Activated CD4-positive, alpha-beta T cell treated with anti-CD3 and anti-CD28 coated beads for 36 hours (primary cell): ENCODE measurements at regions of chr3 and their contacts with region 1.

Region 1: GRCh38 chr3:52270252-52270754 is 8.1 kb downstream of the WDR82 start:
- DNase-seq: no peak
- ATAC-seq: no peak
- H3K4me3 Mint-ChIP-seq: peak overlapping the region; percentile 99
- H3K27ac Mint-ChIP-seq: peak overlapping the region; percentile 93
- H3K4me1 Mint-ChIP-seq: peaks cover 85% of the 10 kb centered on the region
- H3K27me3 Mint-ChIP-seq: no peaks in the 10 kb centered on the region

Region 2: DNA sequence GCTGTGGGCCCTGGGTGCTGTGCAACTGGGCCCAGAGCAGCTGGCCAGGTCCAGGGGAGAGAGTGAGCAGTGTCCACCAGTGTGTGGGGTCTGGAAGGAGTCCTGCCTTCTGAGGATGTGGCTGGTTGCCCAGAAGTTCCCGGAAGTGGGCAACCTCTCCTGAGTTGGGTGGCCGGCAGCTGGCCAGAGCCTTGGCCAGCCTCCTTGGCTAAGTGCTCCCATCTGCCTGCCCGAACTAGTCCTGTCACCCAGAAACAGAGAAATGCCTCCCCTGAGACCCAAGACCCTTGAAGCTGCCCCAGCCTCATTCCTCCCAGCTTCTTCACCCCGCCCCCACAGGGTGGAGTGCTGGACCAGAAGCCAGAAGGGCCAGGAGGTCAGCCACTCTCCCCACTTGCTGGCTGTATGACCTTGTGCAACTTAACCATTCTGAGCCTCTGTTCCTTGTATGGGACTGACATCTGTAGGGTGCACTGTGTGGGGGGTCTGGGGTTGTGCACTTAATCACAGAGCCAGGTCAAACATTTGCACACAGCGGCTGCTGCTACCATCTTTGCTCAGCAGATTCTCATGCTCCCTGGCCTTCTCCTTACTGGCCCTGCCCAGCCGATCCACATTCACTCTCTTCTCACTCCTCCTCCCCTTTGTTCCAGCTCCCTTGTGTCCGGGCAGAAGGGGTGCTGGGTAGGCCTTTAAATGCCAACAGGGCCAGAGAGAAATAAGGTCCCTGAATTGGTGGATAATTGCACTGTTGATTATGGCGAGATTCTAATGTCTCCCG is 79.8 kb before region 1 on chr3:
- CTCF ChIA-PET with region 1: no interaction called
- POLR2A ChIA-PET with region 1: no interaction called
- intact Hi-C with region 1: no loop called
- DNase-seq: no peak
- ATAC-seq: no peak
- H3K4me3 Mint-ChIP-seq: no peak overlapping the region
- H3K27ac Mint-ChIP-seq: no peak overlapping the region
- H3K4me1 Mint-ChIP-seq: no peaks in the 10 kb centered on the region
- H3K27me3 Mint-ChIP-seq: no peaks in the 10 kb centered on the region

Region 3: DNA sequence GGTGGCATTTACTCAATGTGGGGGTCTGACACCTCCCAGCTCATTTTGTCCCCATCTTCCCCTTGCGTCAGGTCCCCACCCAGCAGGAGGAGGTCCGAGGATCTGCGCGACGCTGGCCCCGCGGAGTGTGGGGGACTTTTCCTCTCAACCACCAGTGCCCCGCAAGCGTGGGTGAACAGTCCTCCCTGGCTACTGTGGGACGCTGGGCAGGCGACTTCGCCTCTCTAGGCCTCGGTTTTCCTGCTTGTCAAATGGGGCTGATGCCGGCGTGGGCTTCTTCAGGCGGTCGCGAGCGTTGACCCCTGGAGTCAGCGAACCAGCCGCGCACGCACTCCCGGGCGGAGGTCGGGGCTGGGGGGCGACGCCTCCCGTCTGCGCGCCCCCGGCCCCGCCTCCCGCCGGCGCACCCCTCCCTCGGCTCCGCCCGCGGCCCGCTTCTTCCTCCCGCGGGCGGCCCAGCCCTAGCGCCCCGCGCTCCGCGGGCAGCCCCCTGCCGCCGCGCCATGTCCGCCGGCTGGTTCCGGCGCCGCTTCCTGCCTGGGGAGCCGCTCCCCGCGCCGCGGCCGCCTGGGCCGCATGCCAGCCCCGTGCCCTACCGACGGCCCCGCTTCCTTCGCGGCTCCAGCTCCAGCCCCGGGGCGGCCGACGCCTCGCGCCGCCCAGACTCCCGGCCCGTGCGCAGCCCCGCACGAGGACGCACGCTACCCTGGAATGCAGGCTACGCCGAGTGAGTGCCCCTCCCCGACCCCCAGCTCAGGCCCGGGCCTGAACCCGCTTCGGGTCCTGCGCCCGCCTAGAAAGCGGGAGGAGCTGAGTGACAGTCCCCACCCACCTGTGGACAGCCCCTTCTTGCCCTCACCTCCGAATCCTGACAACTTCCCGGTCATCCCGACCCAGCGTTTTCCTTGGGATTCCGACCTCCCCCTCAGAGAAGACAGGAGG is 24.7 kb before region 1 on chr3 and contains the start of gene PPM1M:
- CTCF ChIA-PET with region 1: interaction called, 12 read pairs
- POLR2A ChIA-PET with region 1: interaction called, 5 read pairs
- intact Hi-C with region 1: loop called (anchors 1 kb)
- DNase-seq: peak; percentile 73
- ATAC-seq: peak; percentile 24
- H3K4me3 Mint-ChIP-seq: peak within 1 kb of the TSS; percentile 85
- H3K27ac Mint-ChIP-seq: peak within 1 kb of the TSS; percentile 87
- H3K4me1 Mint-ChIP-seq: peaks cover 78% of the 10 kb centered on the region
- H3K27me3 Mint-ChIP-seq: no peaks in the 10 kb centered on the region
- total RNA-seq, gene PPM1M: 52.9 to 59.2 TPM

Region 4: GRCh38 chr3:52253314-52254304 is 16.7 kb before region 1 on chr3:
- CTCF ChIA-PET with region 1: interaction called, 6 read pairs
- POLR2A ChIA-PET with region 1: interaction called, 4 read pairs
- intact Hi-C with region 1: loop called (anchors 1 kb)
- DNase-seq: peak; percentile 92
- ATAC-seq: peak; percentile 89
- H3K4me3 Mint-ChIP-seq: peak overlapping the region; percentile 64
- H3K27ac Mint-ChIP-seq: peak overlapping the region; percentile 99
- H3K4me1 Mint-ChIP-seq: peaks cover 82% of the 10 kb centered on the region
- H3K27me3 Mint-ChIP-seq: no peaks in the 10 kb centered on the region

Region 5: DNA sequence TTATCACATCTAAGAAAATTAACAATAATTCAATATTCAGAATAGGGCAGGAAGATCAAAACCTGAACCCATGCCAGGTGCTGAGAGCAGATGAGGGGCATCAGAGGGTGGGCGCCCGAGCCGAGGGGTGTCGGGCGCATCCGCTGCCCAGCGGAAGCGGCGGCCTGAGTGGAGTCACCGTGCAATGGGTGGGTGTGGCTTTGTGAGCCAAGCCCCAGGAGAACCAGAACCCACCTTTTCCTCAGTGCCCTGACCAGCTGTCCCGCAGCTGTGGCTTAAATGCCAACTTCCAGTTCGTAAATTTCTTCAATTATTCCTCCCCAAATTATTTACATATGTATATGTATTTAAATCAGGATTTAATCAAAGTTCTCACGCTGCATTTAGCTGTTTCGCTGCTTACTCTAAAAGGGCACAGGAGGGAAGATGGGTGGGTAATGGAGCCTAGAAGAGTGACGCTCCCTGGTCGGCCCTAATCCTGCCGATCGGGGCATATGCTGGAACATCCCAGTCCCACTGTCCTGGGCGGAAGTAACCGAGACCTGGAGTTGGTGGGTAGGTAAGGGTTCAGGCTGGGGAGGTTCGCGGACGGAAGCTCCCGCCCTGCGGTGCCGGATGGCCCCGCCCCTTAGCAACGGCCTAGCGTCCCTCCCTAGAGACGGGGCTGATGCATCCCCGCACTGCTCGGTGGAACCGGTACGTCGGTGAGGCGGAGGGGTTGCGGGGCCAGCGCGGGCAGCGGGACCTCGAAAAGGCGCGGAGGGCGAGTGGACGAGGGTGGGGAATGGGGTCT is 47.1 kb after region 1 on chr3:
- CTCF ChIA-PET with region 1: no interaction called
- POLR2A ChIA-PET with region 1: no interaction called
- intact Hi-C with region 1: no loop called
- DNase-seq: peak; percentile 83
- ATAC-seq: peak; percentile 96
- H3K4me3 Mint-ChIP-seq: peak overlapping the region; percentile 50
- H3K27ac Mint-ChIP-seq: no peak overlapping the region
- H3K4me1 Mint-ChIP-seq: peaks cover 20% of the 10 kb centered on the region
- H3K27me3 Mint-ChIP-seq: no peaks in the 10 kb centered on the region

Region 6: DNA sequence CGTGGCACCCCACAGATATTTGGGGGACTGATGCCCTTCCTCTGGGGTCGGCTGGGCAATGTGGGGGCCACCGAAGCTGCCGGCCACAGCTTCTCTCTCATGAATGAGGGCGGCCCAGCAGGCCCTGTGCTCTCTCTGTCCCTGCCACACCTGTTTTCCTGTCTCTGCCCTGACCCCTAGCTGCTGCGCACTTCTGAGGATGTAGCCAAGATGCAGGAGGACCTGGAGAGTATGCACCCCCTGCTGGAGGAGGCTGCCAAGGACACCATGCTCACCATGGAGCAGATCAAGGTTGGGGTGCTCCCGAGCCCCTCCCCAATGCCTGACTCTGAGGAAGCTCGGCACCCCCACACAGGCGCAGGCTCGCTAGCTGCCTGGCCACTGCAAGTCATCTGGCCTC is 114.9 kb after region 1 on chr3:
- CTCF ChIA-PET with region 1: no interaction called
- POLR2A ChIA-PET with region 1: no interaction called
- intact Hi-C with region 1: no loop called
- DNase-seq: peak; percentile 67
- ATAC-seq: peak; percentile 77
- H3K4me3 Mint-ChIP-seq: no peak overlapping the region
- H3K27ac Mint-ChIP-seq: no peak overlapping the region
- H3K4me1 Mint-ChIP-seq: no peaks in the 10 kb centered on the region
- H3K27me3 Mint-ChIP-seq: no peaks in the 10 kb centered on the region